ENCODE measurements at regions of chr11 and their contacts with region 1.

Region 1: DNA sequence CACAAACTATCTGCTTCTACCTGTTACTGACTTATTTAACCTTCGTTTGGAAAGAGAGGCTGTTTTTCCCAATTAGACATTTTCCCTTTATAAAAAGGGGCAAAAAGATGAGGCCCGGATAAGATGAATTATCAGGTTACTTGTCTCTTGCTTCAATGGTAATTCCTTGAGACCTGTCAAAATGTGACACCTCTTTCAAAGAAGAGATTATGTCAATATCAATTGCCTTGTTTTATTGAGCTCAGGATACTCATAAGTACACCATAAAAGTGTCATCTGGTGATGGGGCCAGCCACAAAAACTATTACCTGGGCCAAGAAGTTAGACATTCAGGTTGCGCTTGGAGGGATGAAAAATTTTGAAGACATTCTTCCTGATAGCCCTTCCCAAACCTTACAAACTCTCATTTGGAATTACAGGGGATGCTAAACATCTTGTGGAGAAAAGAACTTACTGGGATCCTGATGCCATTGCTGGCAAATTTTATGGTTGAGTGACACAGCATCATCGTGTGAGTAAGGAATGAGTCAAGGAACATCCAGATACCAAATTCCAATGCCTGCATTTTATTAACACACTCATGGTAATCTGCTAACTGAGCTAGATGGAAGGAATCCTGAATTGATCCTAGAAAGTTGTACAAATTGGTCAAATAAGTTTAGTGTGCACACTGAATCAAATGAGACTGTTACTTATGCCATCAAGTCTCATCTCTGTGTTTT is 1071.2 kb downstream of the LRRC4C start:
- DNase-seq: no peak
- H3K4me3 ChIP-seq: no peak overlapping the region
- H3K27ac ChIP-seq: no peak overlapping the region
- H3K4me1 ChIP-seq: no peaks in the 10 kb centered on the region
- H3K27me3 ChIP-seq: no peaks in the 10 kb centered on the region
- CTCF ChIP-seq: no peak
- POLR2A ChIP-seq: no peak

Region 2: GRCh38 chr11:39374963-39375698 is 1013.1 kb before region 1 on chr11:
- intact Hi-C with region 1: loop called (anchors 10 kb)
- DNase-seq: no peak
- H3K4me3 ChIP-seq: no peak overlapping the region
- H3K27ac ChIP-seq: no peak overlapping the region
- H3K4me1 ChIP-seq: no peaks in the 10 kb centered on the region
- H3K27me3 ChIP-seq: no peaks in the 10 kb centered on the region
- CTCF ChIP-seq: peak in 1 of 3 donors; percentile 32
- POLR2A ChIP-seq: no peak

Region 3: GRCh38 chr11:40360206-40360798 is 28.0 kb before region 1 on chr11:
- intact Hi-C with region 1: no loop called
- DNase-seq: no peak
- H3K4me3 ChIP-seq: no peak overlapping the region
- H3K27ac ChIP-seq: no peak overlapping the region
- H3K4me1 ChIP-seq: no peaks in the 10 kb centered on the region
- H3K27me3 ChIP-seq: no peaks in the 10 kb centered on the region
- CTCF ChIP-seq: no peak
- POLR2A ChIP-seq: no peak

Measured in breast epithelium (tissue), 4 donors.